PC-3 (cell line): ENCODE measurements at regions of chr19 and their contacts with region 1.

Region 1: GRCh38 chr19:39122934-39123731 is 2.5 kb upstream of the PAK4 start:
- DNase-seq: no peak
- ATAC-seq: no peak
- H3K4me3 ChIP-seq: no peak overlapping the region
- H3K27ac ChIP-seq: no peak overlapping the region
- H3K4me1 ChIP-seq: peaks cover 7% of the 10 kb centered on the region; the same call in 1 of the 2 replicates
- H3K27me3 ChIP-seq: no peaks in the 10 kb centered on the region
- CTCF ChIP-seq: no peak

Region 2: GRCh38 chr19:39187559-39187957 is 64.4 kb after region 1 on chr19:
- CTCF ChIA-PET with region 1: no interaction called
- POLR2A ChIA-PET with region 1: no interaction called
- intact Hi-C with region 1: loop called (anchors 1 kb)
- DNase-seq: no peak
- ATAC-seq: peak; percentile 31; the same call in 1 of the 2 replicates
- H3K4me3 ChIP-seq: no peak overlapping the region
- H3K27ac ChIP-seq: no peak overlapping the region
- H3K4me1 ChIP-seq: no peaks in the 10 kb centered on the region
- H3K27me3 ChIP-seq: no peaks in the 10 kb centered on the region
- CTCF ChIP-seq: peak; percentile 18; the same call in 1 of the 2 replicates

Region 3: GRCh38 chr19:39223681-39224279 is 100.6 kb after region 1 on chr19:
- CTCF ChIA-PET with region 1: no interaction called
- POLR2A ChIA-PET with region 1: no interaction called
- intact Hi-C with region 1: no loop called
- DNase-seq: peak; percentile 25
- ATAC-seq: no peak
- H3K4me3 ChIP-seq: no peak overlapping the region
- H3K27ac ChIP-seq: no peak overlapping the region
- H3K4me1 ChIP-seq: no peaks in the 10 kb centered on the region
- H3K27me3 ChIP-seq: no peaks in the 10 kb centered on the region
- CTCF ChIP-seq: no peak

Region 4: GRCh38 chr19:39328046-39328705 is 205.0 kb after region 1 on chr19:
- CTCF ChIA-PET with region 1: no interaction called
- POLR2A ChIA-PET with region 1: no interaction called
- intact Hi-C with region 1: loop called (anchors 2 kb)
- DNase-seq: peak; percentile 79
- ATAC-seq: peak; percentile 65
- H3K4me3 ChIP-seq: no peak overlapping the region
- H3K27ac ChIP-seq: no peak overlapping the region
- H3K4me1 ChIP-seq: no peaks in the 10 kb centered on the region
- H3K27me3 ChIP-seq: no peaks in the 10 kb centered on the region
- CTCF ChIP-seq: peak; percentile 90